Left ventricle myocardium inferior (tissue), 1 donor: ENCODE measurements at regions of chr2 and their contacts with region 1.

Region 1: GRCh38 chr2:15636972-15637785 is 45.5 kb downstream of the DDX1 start:
- DNase-seq: peak; percentile 63
- H3K4me3 ChIP-seq: no peak overlapping the region
- H3K27ac ChIP-seq: peak overlapping the region; percentile 15
- H3K4me1 ChIP-seq: peaks cover 54% of the 10 kb centered on the region
- H3K27me3 ChIP-seq: no peaks in the 10 kb centered on the region
- CTCF ChIP-seq: peak; percentile 85

Region 2: DNA sequence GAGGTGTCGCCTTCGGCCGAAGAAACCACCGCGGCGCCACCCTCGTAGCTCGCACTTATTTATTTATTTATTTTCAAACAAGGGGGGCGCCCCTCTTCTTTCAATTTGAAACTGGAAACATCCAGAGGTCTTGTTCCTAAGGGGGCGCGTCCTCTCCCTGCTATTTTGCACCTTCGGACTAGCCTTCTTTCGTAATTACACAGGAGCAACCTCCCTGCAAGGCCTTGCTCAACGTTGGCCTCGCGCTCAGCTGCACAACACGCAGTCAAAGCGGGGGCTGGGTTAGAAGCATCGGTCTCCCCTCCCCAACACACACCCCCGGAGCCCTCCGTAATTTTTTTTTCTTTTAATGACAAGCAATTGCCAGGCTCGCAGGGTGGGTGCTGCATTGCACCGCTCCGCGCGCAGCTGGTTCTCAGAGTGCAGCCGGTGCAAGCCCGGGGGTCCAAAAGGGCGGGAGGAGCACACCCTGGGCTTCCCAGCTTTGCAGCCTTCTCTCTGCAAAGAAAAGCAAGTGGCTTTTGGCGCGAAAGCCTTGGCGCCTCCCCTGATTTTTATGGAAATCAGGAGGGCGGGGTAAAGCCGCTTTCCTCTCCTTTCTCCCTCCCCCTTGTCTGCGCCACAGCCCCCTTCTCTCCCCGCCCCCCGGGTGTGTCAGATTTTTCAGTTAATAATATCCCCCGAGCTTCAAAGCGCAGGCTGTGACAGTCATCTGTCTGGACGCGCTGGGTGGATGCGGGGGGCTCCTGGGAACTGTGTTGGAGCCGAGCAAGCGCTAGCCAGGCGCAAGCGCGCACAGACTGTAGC is 302.9 kb after region 1 on chr2 and contains the start of gene MYCN:
- intact Hi-C with region 1: loop called (anchors 10 kb)
- DNase-seq: peak; percentile 43
- H3K4me3 ChIP-seq: peak within 1 kb of the TSS; percentile 73
- H3K27ac ChIP-seq: peak within 1 kb of the TSS; percentile 44
- H3K4me1 ChIP-seq: peaks cover 52% of the 10 kb centered on the region
- H3K27me3 ChIP-seq: peaks cover 57% of the 10 kb centered on the region
- CTCF ChIP-seq: peak; percentile 16
- total RNA-seq, gene MYCN: 0.38 TPM

Region 3: GRCh38 chr2:15984368-15985255 is 347.4 kb after region 1 on chr2:
- intact Hi-C with region 1: no loop called
- DNase-seq: peak; percentile 22
- H3K4me3 ChIP-seq: no peak overlapping the region
- H3K27ac ChIP-seq: no peak overlapping the region
- H3K4me1 ChIP-seq: no peaks in the 10 kb centered on the region
- H3K27me3 ChIP-seq: peaks cover 19% of the 10 kb centered on the region
- CTCF ChIP-seq: no peak

Region 4: GRCh38 chr2:16281451-16282336 is 644.5 kb after region 1 on chr2:
- intact Hi-C with region 1: loop called (anchors 10 kb)
- DNase-seq: no peak
- H3K4me3 ChIP-seq: no peak overlapping the region
- H3K27ac ChIP-seq: no peak overlapping the region
- H3K4me1 ChIP-seq: no peaks in the 10 kb centered on the region
- H3K27me3 ChIP-seq: peaks cover 4% of the 10 kb centered on the region
- CTCF ChIP-seq: peak; percentile 69